HEK293 (cell line): ENCODE measurements at regions of chr11 and their contacts with region 1.

Region 1: DNA sequence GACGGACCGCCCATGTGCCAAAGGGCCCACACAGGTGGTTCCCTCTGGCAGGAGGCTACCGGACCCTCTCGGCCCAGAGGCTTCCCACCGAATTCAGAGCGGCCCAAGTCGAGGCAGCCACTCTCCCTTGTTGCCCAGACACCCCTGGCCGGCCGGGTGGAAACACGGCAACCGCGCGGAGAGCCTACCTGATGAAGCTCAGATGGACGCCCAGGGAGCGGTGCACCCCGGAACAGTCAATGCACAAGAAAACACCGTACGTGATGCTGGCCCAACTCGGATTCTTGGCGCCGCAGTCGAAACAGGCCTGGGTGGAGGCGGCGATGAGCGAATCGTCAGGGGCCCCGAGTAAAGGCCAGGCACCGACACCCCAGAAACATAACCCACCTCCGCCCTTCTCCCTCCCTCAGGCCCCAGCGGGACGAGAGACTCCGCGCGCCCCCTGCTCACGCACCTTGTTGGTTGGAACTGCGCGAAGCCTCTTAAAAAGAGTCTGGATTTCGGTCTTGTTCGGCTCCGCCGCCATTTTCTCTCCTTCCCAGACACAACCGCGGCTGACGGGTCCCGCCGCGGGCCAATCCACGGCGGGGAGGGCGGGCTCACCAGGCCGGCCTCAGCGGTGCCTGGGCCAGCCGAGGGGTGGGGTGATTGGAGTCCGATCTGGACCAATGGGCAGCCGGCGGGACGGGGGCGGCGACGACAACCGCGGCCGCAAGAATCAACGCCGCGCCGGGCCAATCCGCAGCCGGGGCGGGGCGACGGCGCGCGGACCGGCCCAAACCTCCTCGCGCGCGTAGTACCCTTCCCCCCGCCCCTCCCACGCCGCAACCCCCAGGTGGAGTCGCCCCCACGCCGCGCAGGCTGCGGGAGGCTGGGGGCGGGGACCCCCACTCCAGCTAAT is at the start of gene ARFGAP2:
- H3K4me3 ChIP-seq: peak within 1 kb of the TSS; percentile 97
- H3K27ac ChIP-seq: peak within 1 kb of the TSS; percentile 70
- H3K4me1 ChIP-seq: no peaks in the 10 kb centered on the region
- CTCF ChIP-seq: no peak; the same call in 1 of the 2 replicates

Region 2: GRCh38 chr11:47083913-47084312 is 92.7 kb before region 1 on chr11:
- CTCF ChIA-PET with region 1: no interaction called
- POLR2A ChIA-PET with region 1: no interaction called
- H3K4me3 ChIP-seq: no peak overlapping the region
- H3K27ac ChIP-seq: no peak overlapping the region
- H3K4me1 ChIP-seq: no peaks in the 10 kb centered on the region
- CTCF ChIP-seq: no peak

Region 3: DNA sequence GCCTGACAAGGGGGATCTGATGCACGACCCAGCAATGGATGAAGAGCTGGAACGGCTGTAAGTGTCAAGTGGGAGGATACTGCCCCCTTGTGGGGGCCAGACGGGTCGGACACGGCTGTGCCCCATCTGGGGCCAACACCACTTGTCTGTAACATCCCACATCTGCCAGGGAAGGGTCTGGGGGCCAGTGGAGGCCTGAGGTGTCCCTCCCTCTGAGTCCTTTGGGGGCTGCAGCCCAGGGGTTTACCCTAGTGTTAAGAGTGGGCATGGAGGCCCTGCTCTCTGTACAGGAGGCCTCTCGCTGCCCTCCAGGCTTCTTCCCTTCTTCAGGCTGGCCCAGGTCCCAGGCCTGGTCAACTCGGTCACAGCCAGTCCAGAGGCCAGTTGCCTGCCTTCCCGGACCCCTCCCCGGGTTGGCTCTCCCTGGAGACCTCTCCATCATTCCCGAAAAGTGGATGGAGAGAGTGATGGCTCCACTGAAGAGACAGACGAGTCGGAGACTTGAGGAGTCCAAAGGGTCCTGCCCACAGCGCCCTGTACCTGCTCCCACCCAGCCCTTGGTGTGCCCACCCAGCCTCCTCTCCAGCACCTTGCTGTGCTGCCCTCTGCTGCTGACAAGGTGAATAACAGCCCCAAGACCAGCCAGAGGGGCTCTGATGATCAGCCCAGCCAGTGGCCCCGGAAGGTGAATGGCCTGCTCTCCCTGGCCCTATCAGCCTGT is 15.3 kb before region 1 on chr11:
- CTCF ChIA-PET with region 1: interaction called, 10 read pairs
- POLR2A ChIA-PET with region 1: interaction called, 11 read pairs
- H3K4me3 ChIP-seq: no peak overlapping the region
- H3K27ac ChIP-seq: no peak overlapping the region
- H3K4me1 ChIP-seq: no peaks in the 10 kb centered on the region
- CTCF ChIP-seq: peak; percentile 42